Posterior vena cava (tissue), 2 donors: ENCODE measurements at regions of chr4 and their contacts with region 1.

Region 1: GRCh38 chr4:164768516-164768915 is 14.6 kb downstream of the SMIM31 start:
- DNase-seq: no peak

Region 2: DNA sequence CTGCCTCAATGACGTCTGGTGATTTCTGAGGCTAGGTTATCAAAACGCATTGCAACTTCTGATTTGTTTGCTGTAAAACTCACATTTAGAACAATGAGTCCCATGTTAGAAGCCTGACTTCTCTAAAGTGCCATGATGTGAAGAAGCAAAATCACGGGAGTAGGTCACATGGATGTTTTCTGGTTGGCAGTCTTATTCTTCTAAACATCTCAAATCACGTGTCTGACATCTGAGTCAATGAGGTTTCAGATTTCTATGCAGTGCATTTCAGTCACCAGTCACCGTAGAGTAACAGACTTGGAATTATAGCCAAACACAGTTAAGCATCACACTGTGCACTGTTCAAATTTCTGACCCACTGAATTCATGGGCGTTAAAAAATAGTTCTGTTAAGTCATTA is 791.9 kb before region 1 on chr4:
- intact Hi-C with region 1: no loop called
- DNase-seq: no peak

Region 3: DNA sequence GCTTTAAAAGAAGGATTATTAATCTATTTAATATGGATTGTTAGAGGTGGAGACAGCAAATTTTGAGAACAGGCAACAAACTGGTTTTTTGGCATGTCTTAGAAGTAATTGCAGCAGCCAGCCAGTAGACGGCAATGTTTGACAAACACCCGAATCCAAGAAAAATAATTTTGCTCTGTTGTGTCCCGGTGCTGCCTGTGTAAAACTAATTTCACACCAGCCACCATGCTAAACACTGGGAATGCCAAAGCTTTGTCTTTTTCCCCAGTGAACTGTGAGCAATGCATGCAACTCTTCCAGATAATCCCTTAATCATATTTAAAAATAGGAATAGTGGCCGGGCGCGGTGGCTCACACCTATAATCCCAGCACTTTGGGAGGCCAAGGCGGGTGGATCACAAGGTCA is 11.3 kb after region 1 on chr4:
- intact Hi-C with region 1: loop called in 1 of 2 experiments (anchors 1 kb)
- DNase-seq: no peak